K562 (cell line): ENCODE measurements at regions of chr10 and their contacts with region 1.

Region 1: DNA sequence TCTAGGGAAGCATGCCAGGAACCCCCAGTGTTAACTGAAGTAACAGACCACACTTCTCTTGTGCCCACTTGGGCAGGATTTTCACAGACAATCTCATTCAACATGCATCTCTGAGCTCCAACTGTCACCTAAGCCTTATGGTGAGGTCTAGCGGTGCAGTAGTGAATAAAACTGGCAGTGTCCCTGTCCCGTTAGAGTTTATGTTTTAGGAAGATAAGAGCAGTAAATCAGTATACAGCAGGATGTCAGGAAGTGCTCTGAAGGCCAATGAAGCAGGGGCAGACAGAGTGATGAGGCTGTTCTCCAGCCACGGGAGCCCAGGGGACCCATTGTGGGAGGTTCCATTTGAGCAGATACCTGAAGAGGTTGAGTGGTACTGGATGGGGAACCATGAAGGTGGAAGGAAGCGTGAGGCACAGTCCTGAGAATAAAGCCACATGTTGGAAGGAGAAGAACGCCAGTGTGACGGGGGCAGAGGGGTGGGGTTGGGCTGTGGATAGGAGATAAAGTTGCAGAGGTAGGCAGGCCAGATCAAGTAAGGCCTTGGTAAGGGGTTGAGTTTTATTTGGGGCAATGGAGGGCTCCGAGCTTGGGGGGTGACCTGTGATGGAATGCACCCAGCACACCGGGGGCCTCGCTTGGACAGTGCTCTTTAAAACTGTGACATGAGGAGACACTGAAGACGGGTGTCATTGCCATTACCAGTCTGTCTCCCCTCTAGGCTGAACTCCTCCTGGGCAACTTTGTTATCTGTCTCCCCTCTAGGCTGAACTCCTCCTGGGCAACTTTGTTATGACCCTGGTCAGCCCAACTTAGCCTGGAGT is 6.6 kb downstream of the GDF10 start:
- DNase-seq: peak; percentile 60 to 78 (median 69)
- ATAC-seq: peak; percentile 91
- H3K4me3 ChIP-seq: no peak overlapping the region
- H3K27ac ChIP-seq: no peak overlapping the region; the same call in 2 of the 3 replicates
- H3K4me1 ChIP-seq: peaks cover 22 to 37% of the 10 kb centered on the region in 2 experiments; a peak in 4 of 5 replicates
- H3K27me3 ChIP-seq: peaks cover 3 to 16% of the 10 kb centered on the region in 2 experiments
- CTCF ChIP-seq: no peak; a peak in 1 of 6 replicates
- EP300 ChIP-seq: peak; percentile 78
- POLR2A ChIP-seq: no peak
- RAD21 ChIP-seq: no peak

Region 2: GRCh38 chr10:47287365-47287802 is 19.2 kb before region 1 on chr10:
- CTCF ChIA-PET with region 1: interaction called, 3 read pairs
- POLR2A ChIA-PET with region 1: interaction called, 3 read pairs
- in situ Hi-C with region 1: no loop called
- intact Hi-C with region 1: loop called (anchors 2 kb)
- DNase-seq: no peak
- ATAC-seq: no peak
- H3K4me3 ChIP-seq: no peak overlapping the region
- H3K27ac ChIP-seq: no peak overlapping the region
- H3K4me1 ChIP-seq: no peaks in the 10 kb centered on the region; a peak in 1 of 5 replicates
- H3K27me3 ChIP-seq: peaks cover 9 to 63% of the 10 kb centered on the region in 2 experiments; a peak in 4 of 5 replicates
- CTCF ChIP-seq: no peak
- EP300 ChIP-seq: no peak
- POLR2A ChIP-seq: no peak
- RAD21 ChIP-seq: no peak

Region 3: DNA sequence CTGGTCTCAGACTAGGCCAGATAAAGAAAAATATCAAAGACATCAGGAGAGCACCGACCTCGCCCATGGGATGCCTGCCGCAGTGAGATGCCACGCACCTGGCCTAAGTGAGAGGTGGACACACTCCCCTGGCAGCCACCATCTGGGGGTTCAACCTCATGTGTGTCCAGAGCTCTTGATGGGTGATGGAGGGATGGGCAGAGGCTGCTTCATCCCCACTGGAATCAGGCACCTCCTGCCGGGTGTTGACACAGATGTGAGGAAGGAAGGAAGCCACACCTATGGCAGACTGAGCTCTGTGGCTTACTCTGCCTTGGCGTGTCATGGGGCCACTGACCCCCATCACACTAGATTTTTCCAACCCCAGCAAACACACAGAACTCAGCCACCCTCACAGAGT is 66.1 kb after region 1 on chr10:
- CTCF ChIA-PET with region 1: no interaction called
- POLR2A ChIA-PET with region 1: no interaction called
- in situ Hi-C with region 1: no loop called
- intact Hi-C with region 1: no loop called
- DNase-seq: no peak
- ATAC-seq: no peak
- H3K4me3 ChIP-seq: no peak overlapping the region
- H3K27ac ChIP-seq: no peak overlapping the region
- H3K4me1 ChIP-seq: no peaks in the 10 kb centered on the region; a peak in 1 of 5 replicates
- H3K27me3 ChIP-seq: peaks cover 50 to 78% of the 10 kb centered on the region in 2 experiments
- CTCF ChIP-seq: no peak
- EP300 ChIP-seq: no peak
- POLR2A ChIP-seq: no peak
- RAD21 ChIP-seq: no peak